Naive thymus-derived CD4-positive, alpha-beta T cell (primary cell): ENCODE measurements at regions of chr1 and their contacts with region 1.

Region 1: DNA sequence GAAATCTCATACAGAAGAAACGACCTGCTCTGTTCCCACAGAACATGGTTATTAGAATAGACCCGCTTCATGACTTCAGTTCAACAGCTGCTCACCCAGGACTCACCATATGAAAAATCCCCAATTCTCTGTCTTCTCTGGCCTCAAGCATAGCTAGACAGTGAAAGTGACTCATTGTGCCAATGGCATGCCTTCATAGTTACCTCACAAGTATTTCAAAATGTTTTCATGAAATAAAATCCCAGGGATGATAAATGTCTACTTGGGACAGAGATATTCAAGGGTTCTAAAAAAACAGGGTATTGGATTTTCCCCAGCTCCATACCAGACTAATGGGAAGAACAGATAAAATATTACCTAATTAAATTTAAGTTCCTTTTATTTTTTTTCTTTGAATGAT is 82.3 kb downstream of the NOTCH2 start:
- DNase-seq: no peak
- ATAC-seq: peak; percentile 72
- H3K4me3 ChIP-seq: no peak overlapping the region
- H3K4me3 Mint-ChIP-seq: peak overlapping the region in 2 of 10 donors; percentile 52 to 62
- H3K27ac ChIP-seq: no peak overlapping the region
- H3K27ac Mint-ChIP-seq: peak overlapping the region in 6 of 9 donors; percentile 43 to 84 (median 78)
- H3K4me1 ChIP-seq: peaks cover 0 to 14% of the 10 kb centered on the region in 2 donors
- H3K4me1 Mint-ChIP-seq: peaks cover 36 to 48% (median 41%) of the 10 kb centered on the region in 7 donors
- H3K27me3 ChIP-seq: no peaks in the 10 kb centered on the region
- H3K27me3 Mint-ChIP-seq: no peaks in the 10 kb centered on the region

Region 2: DNA sequence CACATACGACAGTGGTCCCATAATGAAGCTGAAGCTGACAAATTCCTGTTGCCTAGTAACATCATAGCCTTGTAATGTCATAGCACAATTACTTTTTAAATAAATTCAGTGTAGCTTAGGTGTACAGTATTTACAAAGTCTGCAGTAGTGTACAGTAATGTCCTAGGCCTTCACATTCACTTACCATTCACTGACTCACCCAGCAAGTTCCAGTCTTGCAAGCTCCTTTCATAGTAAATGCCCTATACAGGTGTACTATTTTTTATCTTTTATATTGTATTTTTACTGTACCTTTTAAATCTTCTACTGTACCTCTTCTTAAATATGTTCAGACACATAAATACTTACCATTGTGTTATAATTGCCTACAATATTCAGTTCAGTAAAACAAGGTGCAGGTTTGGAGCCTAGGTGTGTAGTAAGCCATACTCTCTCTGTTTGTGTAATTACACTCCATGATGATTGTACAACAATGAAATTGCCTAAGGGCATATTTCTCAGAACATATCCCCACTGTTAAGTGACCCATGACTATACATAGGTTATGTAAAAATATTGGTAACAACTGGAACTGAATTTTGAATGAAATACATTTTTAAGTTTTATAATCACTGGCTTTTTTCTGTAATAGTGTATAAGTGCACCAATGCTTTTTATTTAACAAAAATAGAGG is 57.3 kb before region 1 on chr1:
- CTCF ChIA-PET with region 1: no interaction called
- POLR2A ChIA-PET with region 1: no interaction called
- intact Hi-C with region 1: loop called in 1 of 2 experiments (anchors 5 kb)
- DNase-seq: no peak
- ATAC-seq: no peak
- H3K4me3 ChIP-seq: no peak overlapping the region
- H3K4me3 Mint-ChIP-seq: no peak overlapping the region
- H3K27ac ChIP-seq: no peak overlapping the region
- H3K27ac Mint-ChIP-seq: no peak overlapping the region
- H3K4me1 ChIP-seq: no peaks in the 10 kb centered on the region
- H3K4me1 Mint-ChIP-seq: peaks cover 0 to 2% (median 0%) of the 10 kb centered on the region in 7 donors
- H3K27me3 ChIP-seq: no peaks in the 10 kb centered on the region
- H3K27me3 Mint-ChIP-seq: no peaks in the 10 kb centered on the region

Region 3: DNA sequence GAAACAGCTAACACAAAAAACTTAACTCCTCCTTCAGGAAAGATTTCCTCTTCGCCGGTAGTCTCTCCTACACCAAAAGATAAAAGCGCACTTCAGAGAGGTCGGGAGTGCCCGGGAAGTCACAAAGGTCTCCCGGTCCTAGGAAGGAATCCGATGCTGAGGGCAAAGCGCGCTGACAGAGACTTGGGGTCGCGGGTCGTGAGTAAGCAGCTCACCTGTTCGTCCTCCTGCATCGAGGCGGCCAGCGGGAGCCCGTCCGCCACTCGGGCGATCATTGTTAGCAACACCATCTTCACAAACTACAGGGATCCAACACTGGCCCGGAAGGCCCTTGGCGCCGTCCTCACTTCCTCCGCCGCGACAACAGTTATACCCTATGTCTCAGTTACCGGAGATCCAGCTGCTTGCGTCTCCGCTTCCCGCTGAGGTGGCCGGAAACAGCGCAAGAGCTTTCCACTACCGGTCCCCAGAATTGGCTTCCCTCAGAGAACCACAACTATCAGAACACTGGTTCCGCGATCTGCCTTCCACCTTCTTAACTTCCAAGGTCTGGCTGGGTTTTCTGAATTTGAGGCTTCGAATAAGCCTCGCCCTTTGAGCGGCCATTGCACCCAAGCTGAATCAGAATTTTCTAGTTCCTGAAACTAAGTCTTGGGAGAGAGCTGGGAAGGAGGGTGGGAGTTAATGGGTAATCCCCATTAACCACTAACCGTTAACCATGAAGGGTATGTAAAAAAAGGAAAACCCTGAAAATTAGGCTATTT is 189.2 kb after region 1 on chr1 and contains the start of gene SEC22B:
- CTCF ChIA-PET with region 1: no interaction called
- POLR2A ChIA-PET with region 1: no interaction called
- intact Hi-C with region 1: no loop called
- DNase-seq: peak; percentile 70 to 93 (median 90)
- ATAC-seq: peak; percentile 99
- H3K4me3 ChIP-seq: peak within 1 kb of the TSS; percentile 92
- H3K4me3 Mint-ChIP-seq: peak within 1 kb of the TSS; percentile 93 to 100 (median 99)
- H3K27ac ChIP-seq: peak within 1 kb of the TSS; percentile 93
- H3K27ac Mint-ChIP-seq: peak within 1 kb of the TSS; percentile 97 to 100 (median 99)
- H3K4me1 ChIP-seq: peaks cover 3 to 5% of the 10 kb centered on the region in 2 donors
- H3K4me1 Mint-ChIP-seq: peaks cover 0 to 33% (median 27%) of the 10 kb centered on the region in 7 donors
- H3K27me3 ChIP-seq: no peaks in the 10 kb centered on the region
- H3K27me3 Mint-ChIP-seq: peaks cover 0 to 2% (median 0%) of the 10 kb centered on the region in 5 donors
- total RNA-seq, gene SEC22B: 28.1 to 49.6 (median 35.3) TPM